ENCODE measurements at regions of chr19 and their contacts with region 1.

Region 1: GRCh38 chr19:46529622-46530462 is 34.2 kb upstream of the PNMA8B start:
- DNase-seq: peak; percentile 49 to 97 (median 78)

Region 2: DNA sequence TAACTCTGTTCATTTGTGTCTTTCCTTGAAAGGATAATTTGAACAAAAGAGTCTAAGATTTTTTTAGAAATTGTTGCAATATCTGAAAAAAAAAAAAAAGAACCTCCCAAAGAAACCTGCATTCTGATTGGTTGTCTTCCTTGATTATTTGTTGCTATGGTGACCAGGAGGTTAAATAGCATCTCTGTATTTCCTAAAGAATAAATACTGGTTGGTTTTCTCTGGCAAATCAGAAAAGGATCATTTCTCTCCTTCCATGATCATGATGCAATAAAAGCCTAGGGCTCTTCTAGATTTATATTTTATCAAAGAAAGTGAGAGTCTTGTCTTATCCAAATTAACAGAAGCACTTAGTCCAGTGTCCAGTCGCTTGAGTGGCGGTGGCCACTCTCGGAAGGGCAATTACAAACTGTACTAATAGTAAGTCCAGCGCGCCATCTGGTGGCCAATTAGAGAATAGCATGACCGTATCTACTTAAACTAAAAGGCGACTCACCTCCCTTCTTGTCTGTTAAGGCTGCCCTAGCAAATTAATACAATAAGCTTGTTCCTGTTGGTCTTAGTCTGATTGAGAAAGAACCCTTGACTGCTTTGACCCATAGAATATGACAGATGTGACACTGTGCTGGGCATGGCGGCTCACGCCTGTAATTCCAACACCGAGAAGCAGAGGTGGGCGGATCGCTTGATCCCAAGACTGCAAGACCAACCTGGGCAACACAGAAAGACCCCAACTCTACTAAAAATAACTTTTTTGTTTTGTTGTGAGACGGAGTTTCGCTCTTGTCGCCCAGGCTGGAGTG is 12.8 kb after region 1 on chr19:
- intact Hi-C with region 1: loop called (anchors 1 kb)
- DNase-seq: peak; percentile 70 to 96 (median 91)

Region 3: GRCh38 chr19:46571531-46571930 is 41.7 kb after region 1 on chr19:
- intact Hi-C with region 1: loop called (anchors 2 kb)
- DNase-seq: no peak